ENCODE measurements at regions of chr7 and their contacts with region 1.

Region 1: GRCh38 chr7:20991544-20991943 is 204.9 kb upstream of the SP8 start:
- ATAC-seq: no peak
- H3K4me3 ChIP-seq: no peak overlapping the region
- H3K27ac ChIP-seq: no peak overlapping the region
- H3K4me1 ChIP-seq: peaks cover 3 to 8% of the 10 kb centered on the region in 2 donors

Region 2: DNA sequence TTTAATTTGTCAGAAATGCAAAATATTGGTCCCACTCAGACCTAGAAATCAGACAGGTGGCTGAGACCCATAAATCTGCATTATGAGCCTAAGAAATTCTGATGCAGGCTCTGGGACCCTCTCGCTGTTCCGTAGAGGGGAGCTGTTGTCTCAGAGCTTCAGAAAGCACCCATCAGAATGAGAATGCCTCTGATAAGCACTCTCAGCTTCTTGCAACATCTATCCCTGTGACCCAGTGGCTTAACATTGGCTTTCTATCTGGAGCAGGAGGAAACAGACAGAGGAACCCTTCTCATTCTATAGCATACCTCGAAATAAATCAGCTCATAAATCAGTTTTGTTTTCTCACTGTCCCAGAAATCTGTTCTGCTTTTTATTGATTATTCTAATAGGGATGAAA is 251.7 kb after region 1 on chr7:
- in situ Hi-C with region 1: loop called in 1 of 9 experiments (anchors 25 kb)
- ATAC-seq: peak in 3 of 8 experiments; percentile 32 to 44 (median 34)
- H3K4me3 ChIP-seq: no peak overlapping the region
- H3K27ac ChIP-seq: no peak overlapping the region
- H3K4me1 ChIP-seq: peaks cover 0 to 3% of the 10 kb centered on the region in 2 donors